K562 (cell line): ENCODE measurements at regions of chr7 and their contacts with region 1.

Region 1: GRCh38 chr7:151057989-151058780 is 488 bp upstream of the CDK5 start:
- DNase-seq: peak; percentile 96 to 100 (median 98)
- ATAC-seq: peak; percentile 86
- H3K4me3 ChIP-seq: peak overlapping the region; percentile 84
- H3K27ac ChIP-seq: peak overlapping the region; percentile 90
- H3K4me1 ChIP-seq: peaks cover 59 to 75% of the 10 kb centered on the region in 2 experiments
- H3K27me3 ChIP-seq: no peaks in the 10 kb centered on the region
- CTCF ChIP-seq: no peak
- EP300 ChIP-seq: peak; percentile 19; the same call in 1 of the 2 replicates
- POLR2A ChIP-seq: peak; percentile 79
- RAD21 ChIP-seq: 0 out of 4 replicates have a peak, but pooled peaks of 1 of the 2 experiments have one; percentile 7

Region 2: DNA sequence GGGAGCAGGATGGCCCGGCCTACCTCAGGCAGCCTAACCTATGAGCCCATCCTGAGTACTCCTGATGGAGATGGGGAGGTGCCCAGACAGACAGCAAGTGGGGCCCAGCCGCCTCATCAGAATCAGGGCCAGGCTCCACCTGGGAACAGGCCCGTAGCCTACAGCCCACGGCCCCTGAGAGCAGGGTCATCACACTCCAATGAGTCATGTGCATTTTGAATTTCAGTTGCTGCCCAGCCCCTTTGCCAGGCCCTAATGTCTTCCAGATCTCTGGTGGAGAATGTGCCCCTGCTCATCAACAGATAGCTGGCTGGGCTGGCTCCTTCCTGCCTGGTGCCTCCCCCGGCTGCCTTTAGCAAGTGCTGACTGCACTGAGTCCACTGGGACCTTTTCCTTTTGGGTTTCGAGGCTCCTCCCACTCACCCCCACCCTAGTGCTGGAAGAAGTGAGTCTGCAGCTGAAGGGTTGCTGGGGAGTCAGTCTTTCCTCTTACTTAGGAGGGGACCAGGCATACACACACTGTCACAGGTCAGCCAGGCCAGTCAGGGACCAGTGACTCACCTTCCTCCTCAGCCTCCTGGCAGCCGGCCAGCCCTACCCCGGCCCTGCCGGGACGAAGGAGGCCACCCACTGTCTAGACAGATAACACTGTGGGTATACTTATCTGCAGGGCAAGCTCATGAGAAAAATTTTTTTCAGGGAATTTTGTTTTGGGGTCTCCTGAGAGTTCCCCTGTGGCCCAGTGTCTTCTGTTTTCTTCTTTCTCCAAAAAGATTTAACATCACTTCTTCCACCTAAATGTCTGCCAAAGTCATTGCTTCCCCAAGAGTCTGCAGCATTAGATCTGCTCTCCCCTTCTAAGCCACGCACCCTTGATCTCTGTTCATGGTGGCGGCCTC is 19.0 kb before region 1 on chr7:
- CTCF ChIA-PET with region 1: interaction called, 3 read pairs
- POLR2A ChIA-PET with region 1: interaction called, 5 read pairs
- in situ Hi-C with region 1: no loop called
- intact Hi-C with region 1: loop called (anchors 1 kb)
- DNase-seq: peak; percentile 99 to 100 (median 99)
- ATAC-seq: peak; percentile 97
- H3K4me3 ChIP-seq: no peak overlapping the region; the same call in 1 of the 2 replicates
- H3K27ac ChIP-seq: peak overlapping the region; percentile 65
- H3K4me1 ChIP-seq: peaks cover 24 to 73% of the 10 kb centered on the region in 2 experiments
- H3K27me3 ChIP-seq: no peaks in the 10 kb centered on the region
- CTCF ChIP-seq: peak in 1 of 3 experiments; percentile 7; a peak in 1 of 6 replicates
- EP300 ChIP-seq: peak; percentile 93
- POLR2A ChIP-seq: peak; percentile 56; the same call in 1 of the 2 replicates
- RAD21 ChIP-seq: peak in 1 of 2 experiments; percentile 28; a peak in 3 of 4 replicates